PC-9 (cell line): ENCODE measurements at regions of chr3 and their contacts with region 1.

Region 1: DNA sequence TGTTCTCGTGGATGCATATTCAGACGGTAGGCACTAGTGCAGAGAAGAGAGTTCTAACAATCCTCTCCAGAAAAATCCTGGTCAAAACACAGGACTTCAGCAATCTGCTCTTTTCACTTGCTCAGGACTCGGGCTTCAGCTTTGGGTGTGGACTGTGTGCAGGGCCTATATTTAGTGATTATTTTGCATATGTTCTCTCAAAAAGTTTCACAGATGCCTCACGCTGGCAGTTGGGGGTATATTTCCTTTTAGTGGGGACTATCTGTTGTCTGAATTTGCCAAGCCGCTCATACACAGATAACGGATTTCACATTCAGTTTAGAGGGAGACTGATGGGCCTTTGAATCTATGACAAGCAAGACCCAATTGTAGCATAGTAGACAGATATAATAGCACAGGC is 54.4 kb upstream of the LRRN1 start:
- DNase-seq: no peak
- H3K4me3 ChIP-seq: no peak overlapping the region
- H3K27ac ChIP-seq: no peak overlapping the region
- H3K4me1 ChIP-seq: no peaks in the 10 kb centered on the region
- H3K27me3 ChIP-seq: no peaks in the 10 kb centered on the region
- CTCF ChIP-seq: no peak

Region 2: DNA sequence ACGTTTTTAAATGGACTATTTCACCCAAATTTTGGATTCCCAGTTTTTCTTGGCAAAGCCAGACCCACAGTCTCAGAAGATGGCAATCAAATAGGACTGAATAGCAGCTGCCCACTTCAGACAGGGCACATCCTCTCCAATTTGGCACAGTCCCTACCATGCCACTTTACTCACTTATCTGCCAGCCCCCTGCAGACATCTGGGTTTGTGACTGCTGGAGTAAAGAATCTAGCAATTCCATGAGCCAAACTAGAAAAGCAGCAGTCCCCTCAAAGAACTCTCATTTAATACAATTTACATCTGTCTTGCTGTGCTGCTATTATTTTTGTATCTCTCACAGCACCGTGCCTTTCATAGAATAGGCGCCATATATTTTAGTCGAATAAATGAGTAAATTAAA is 38.4 kb after region 1 on chr3:
- CTCF ChIA-PET with region 1: no interaction called
- POLR2A ChIA-PET with region 1: no interaction called
- intact Hi-C with region 1: loop called (anchors 5 kb)
- DNase-seq: no peak
- H3K4me3 ChIP-seq: no peak overlapping the region
- H3K27ac ChIP-seq: no peak overlapping the region
- H3K4me1 ChIP-seq: no peaks in the 10 kb centered on the region
- H3K27me3 ChIP-seq: no peaks in the 10 kb centered on the region
- CTCF ChIP-seq: no peak

Region 3: GRCh38 chr3:3855056-3855455 is 110.2 kb after region 1 on chr3:
- CTCF ChIA-PET with region 1: no interaction called
- POLR2A ChIA-PET with region 1: no interaction called
- intact Hi-C with region 1: no loop called
- DNase-seq: no peak
- H3K4me3 ChIP-seq: no peak overlapping the region
- H3K27ac ChIP-seq: no peak overlapping the region
- H3K4me1 ChIP-seq: no peaks in the 10 kb centered on the region
- H3K27me3 ChIP-seq: no peaks in the 10 kb centered on the region; the same call in 1 of the 2 replicates
- CTCF ChIP-seq: no peak